ENCODE measurements at regions of chr2 and their contacts with region 1.

Region 1: GRCh38 chr2:100381240-100381639 is 36.2 kb downstream of the CHST10 start:
- DNase-seq: peak; percentile 60 to 77
- H3K4me3 ChIP-seq: no peak overlapping the region
- H3K27ac ChIP-seq: no peak overlapping the region
- H3K4me1 ChIP-seq: no peaks in the 10 kb centered on the region
- H3K27me3 ChIP-seq: no peaks in the 10 kb centered on the region
- CTCF ChIP-seq: peak; percentile 69 to 71

Region 2: DNA sequence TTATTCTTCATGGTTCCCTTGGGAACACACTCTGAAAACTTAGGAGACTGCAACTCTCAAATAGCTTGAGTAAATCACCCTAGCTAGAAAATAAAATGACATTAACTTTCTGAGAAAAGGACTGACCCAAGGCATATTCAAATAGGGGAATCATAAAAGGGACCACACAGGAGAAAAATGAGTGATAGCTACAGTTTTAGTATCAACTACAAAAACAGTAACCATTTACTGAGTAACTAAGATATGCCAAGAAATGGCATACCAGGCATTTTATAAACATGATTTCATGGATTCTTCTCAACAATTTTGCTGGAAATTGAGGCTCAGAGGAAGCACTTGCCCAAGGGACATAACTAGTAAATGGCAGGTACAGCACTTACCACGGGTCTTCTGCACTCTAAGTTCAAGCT is 323.3 kb before region 1 on chr2:
- intact Hi-C with region 1: no loop called
- DNase-seq: no peak
- H3K4me3 ChIP-seq: no peak overlapping the region
- H3K27ac ChIP-seq: no peak overlapping the region
- H3K4me1 ChIP-seq: peaks cover 0 to 10% (median 8%) of the 10 kb centered on the region in 4 donors
- H3K27me3 ChIP-seq: no peaks in the 10 kb centered on the region
- CTCF ChIP-seq: no peak

Region 3: GRCh38 chr2:100262555-100263320 is 118.5 kb before region 1 on chr2:
- intact Hi-C with region 1: loop called (anchors 2 kb)
- DNase-seq: peak; percentile 34 to 79
- H3K4me3 ChIP-seq: no peak overlapping the region
- H3K27ac ChIP-seq: no peak overlapping the region
- H3K4me1 ChIP-seq: peaks cover 0 to 9% (median 3%) of the 10 kb centered on the region in 4 donors
- H3K27me3 ChIP-seq: no peaks in the 10 kb centered on the region
- CTCF ChIP-seq: peak; percentile 84 to 90

Measured in tibial artery (tissue), 4 donors.